AG04450 (cell line): ENCODE measurements at regions of chr14 and their contacts with region 1.

Region 1: DNA sequence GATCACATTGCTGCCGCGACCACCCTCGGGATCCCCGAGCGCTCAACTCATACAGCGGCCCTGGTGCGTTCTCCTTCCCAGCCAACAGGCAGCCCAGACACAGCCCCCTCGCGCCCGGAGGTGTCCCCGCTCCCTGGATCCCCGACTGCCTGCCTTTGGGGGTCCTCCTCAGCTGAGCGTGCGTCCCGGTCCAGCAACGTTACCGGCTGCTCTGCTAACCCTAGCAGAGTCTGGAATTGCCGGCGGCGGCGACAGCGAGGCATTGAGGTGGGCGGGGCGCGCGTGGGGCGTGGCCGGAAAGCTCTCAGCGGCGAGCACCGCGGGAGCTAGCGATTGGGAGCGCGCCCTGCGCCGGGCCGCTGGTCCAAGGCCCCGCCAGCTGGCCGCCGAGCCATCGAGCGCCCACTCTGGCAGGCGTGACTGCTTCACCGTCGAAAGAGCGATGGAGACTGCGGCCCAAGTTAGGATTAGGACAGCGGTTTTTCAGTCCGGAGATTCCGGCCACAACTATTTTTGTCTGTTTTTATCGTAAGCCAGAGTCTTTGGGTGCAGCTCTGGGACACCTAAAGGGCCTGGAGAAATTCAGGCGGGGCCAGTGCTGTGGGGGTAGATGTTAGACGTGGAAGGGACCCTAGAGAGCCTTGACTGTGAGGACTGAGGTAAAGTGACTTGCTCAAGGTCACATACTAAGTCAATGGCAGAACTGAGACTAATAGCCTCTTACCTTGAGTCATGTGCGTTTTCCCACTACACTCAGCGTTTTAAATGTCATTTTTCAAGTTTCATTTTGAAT is at the start of gene HEATR5A:
- DNase-seq: peak; percentile 86
- H3K4me3 ChIP-seq: peak within 1 kb of the TSS; percentile 100
- H3K27ac ChIP-seq: peak within 1 kb of the TSS; percentile 86
- H3K27me3 ChIP-seq: no peaks in the 10 kb centered on the region
- CTCF ChIP-seq: peak; percentile 38
- polyA plus RNA-seq, gene HEATR5A: 26.6 and 35.4 TPM in 2 replicates

Region 2: GRCh38 chr14:31207755-31208545 is 212.6 kb before region 1 on chr14 and contains the start of gene HECTD1:
- CTCF ChIA-PET with region 1: no interaction called
- POLR2A ChIA-PET with region 1: interaction called, 10 read pairs
- DNase-seq: peak; percentile 53
- H3K4me3 ChIP-seq: peak within 1 kb of the TSS; percentile 79
- H3K27ac ChIP-seq: peak within 1 kb of the TSS; percentile 99
- H3K27me3 ChIP-seq: no peaks in the 10 kb centered on the region
- CTCF ChIP-seq: peak; percentile 39
- polyA plus RNA-seq, gene HECTD1: 96.5 and 121 TPM in 2 replicates

Region 3: DNA sequence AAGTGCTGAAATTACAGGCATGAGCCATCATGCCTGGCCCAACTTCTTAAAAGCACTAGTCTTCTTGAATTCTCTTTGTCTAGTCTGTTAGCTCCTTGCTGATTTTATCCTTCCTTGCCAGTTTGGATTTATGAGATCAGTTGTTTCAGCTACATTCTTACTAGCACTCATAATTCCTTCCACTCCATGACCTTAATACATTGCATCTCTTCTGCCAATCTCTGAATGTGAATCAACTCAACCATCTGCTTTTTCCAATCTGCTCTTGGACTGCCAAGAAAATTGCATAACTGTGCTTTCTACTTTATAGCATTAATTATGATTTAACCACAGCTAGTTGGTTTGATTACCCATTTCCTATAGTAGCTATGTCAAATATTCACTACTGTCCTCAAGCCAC is 14.8 kb after region 1 on chr14:
- CTCF ChIA-PET with region 1: interaction called, 4 read pairs
- POLR2A ChIA-PET with region 1: interaction called, 31 read pairs
- DNase-seq: no peak
- H3K4me3 ChIP-seq: no peak overlapping the region
- H3K27ac ChIP-seq: no peak overlapping the region
- H3K27me3 ChIP-seq: no peaks in the 10 kb centered on the region
- CTCF ChIP-seq: no peak

Region 4: GRCh38 chr14:31441271-31442110 is 21.0 kb after region 1 on chr14:
- CTCF ChIA-PET with region 1: no interaction called
- POLR2A ChIA-PET with region 1: interaction called, 31 read pairs
- DNase-seq: no peak
- H3K4me3 ChIP-seq: no peak overlapping the region
- H3K27ac ChIP-seq: peak overlapping the region; percentile 57
- H3K27me3 ChIP-seq: no peaks in the 10 kb centered on the region
- CTCF ChIP-seq: no peak

Region 5: GRCh38 chr14:31449971-31450610 is 29.6 kb after region 1 on chr14:
- CTCF ChIA-PET with region 1: interaction called, 12 read pairs
- POLR2A ChIA-PET with region 1: interaction called, 17 read pairs
- DNase-seq: no peak
- H3K4me3 ChIP-seq: no peak overlapping the region
- H3K27ac ChIP-seq: no peak overlapping the region
- H3K27me3 ChIP-seq: no peaks in the 10 kb centered on the region
- CTCF ChIP-seq: peak; percentile 69

Region 6: DNA sequence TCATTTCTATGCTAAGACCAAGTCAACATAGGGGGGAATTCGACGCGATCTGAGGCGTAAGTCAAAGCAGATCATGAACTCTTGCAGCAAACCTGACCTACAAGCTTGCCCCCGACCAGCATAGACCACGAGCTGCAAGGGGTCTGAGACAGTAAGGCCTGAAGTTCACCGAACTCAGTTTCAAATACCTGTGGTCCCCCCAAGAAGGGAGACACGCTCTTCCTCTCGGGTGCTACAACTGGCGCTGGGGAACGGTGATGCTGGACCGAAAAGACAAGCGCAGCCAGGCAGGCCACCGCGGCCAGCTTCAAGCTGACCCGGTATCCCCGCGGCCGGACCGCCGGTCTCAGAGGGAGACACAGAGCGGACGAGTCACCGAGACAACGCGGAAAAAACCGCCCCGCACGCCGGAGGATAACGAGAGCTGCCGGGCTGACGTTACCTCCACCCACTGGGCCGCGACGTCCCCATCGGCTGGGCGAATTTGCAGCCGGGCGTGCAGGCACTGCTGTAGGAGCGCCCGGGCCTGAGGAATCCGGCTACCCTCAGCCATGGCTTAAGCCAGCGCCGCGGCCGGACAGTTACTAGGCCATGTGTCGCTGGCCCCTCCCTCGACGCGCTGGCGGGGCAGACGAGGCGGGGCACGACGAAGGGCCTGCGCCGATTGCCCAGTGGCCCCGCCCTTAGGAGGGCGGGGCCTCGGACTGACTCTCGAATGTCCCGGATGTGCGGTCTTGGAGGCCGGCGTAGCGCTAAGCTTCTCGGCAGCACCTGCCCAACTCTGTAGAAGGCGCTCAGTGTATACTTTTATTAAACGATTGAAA is 36.5 kb after region 1 on chr14 and contains the start of gene DTD2:
- CTCF ChIA-PET with region 1: interaction called, 4 read pairs
- POLR2A ChIA-PET with region 1: interaction called, 12 read pairs
- DNase-seq: peak; percentile 79
- H3K4me3 ChIP-seq: peak within 1 kb of the TSS; percentile 86
- H3K27ac ChIP-seq: peak within 1 kb of the TSS; percentile 83
- H3K27me3 ChIP-seq: no peaks in the 10 kb centered on the region
- CTCF ChIP-seq: no peak
- polyA plus RNA-seq, gene DTD2: 16.6 and 18.8 TPM in 2 replicates